ENCODE measurements at regions of chr3 and their contacts with region 1.

Region 1: DNA sequence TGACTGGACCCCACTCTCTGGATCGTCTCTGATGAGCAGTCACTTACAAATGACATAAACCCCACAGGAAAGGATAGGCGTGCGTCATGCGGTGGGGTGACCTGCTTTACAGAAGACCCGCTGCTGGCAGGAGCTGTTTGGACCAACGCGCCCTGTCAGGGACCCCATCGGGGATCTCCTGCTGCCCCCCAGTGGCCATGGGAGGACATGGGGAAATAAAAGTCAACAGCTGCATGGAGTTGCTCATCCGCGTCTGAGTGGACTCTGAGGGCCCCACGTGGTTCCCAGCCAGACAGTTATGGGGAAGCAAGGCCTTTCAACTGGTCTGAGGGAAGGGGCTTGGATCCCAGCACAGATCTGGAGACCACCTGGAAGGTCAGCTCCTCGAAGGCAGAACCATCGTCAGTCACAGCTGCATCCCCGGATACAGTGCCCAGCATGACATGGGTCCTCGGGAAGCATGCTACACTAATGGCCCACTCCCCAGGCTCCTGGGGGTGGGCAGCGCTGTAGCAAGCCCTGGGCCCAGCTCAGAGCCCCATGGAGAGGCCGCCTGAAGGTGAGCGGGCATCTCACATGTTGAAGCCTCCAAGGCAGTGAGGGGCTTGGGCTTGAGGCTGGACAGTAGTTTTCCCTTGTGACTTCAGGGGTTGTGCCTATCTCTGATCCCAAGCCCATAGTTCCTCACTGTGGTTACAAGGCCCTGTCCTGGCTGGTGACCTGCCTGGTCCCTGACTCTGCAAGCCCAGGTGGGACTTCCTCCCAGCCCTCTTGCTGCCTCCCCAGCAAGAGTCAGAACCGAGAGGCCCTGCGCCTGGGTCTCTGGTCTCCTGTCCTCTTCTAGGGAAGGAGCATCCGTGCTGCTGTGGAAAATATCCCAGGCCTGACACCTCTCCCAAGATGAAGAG is 32.3 kb downstream of the PTH1R start:
- DNase-seq: peak; percentile 86

Region 2: GRCh38 chr3:46585799-46586693 is 323.7 kb before region 1 on chr3:
- in situ Hi-C with region 1: no loop called
- DNase-seq: no peak

Region 3: DNA sequence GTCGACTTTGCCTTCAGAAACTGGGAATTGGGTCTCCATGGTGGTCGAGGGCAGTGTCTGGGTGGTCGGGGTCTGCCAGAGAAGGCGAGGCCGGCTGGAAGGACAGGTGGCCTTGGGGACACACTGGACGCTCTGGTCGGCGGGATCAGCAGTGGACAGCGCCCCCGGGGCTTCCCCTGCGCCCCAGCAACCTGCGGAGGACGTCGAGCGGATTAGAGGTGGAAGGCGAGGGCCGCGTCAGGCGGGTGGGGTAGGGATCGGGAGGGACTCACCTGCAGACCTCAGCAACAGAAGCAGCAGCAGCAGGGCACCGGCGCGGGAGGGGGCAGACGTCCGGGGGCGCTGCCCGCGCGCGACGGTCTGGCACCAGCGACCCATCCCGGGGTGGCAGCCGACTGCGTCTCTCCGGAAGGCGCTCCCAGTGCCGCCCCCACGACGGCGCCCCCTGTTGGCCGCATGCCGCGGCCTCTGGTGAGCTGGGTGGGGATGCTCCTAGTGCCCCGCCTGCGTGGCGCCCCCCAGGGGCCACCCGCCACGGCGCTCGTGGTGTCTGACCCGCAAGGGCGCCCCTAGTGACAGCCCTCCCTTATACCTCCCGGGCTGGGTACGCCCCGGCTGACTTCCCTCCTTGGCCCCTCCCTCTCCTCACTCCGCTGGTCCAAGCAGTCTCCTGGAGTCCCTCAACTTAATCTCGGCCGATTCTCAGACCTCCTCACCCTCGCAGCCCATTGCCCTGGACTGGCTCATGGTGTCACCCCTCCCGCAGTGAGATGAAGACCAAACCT is 192.2 kb before region 1 on chr3 and contains the start of gene PRSS50:
- in situ Hi-C with region 1: loop called (anchors 10 kb)
- DNase-seq: no peak